A673 (cell line): ENCODE measurements at regions of chr4 and their contacts with region 1.

Region 1: DNA sequence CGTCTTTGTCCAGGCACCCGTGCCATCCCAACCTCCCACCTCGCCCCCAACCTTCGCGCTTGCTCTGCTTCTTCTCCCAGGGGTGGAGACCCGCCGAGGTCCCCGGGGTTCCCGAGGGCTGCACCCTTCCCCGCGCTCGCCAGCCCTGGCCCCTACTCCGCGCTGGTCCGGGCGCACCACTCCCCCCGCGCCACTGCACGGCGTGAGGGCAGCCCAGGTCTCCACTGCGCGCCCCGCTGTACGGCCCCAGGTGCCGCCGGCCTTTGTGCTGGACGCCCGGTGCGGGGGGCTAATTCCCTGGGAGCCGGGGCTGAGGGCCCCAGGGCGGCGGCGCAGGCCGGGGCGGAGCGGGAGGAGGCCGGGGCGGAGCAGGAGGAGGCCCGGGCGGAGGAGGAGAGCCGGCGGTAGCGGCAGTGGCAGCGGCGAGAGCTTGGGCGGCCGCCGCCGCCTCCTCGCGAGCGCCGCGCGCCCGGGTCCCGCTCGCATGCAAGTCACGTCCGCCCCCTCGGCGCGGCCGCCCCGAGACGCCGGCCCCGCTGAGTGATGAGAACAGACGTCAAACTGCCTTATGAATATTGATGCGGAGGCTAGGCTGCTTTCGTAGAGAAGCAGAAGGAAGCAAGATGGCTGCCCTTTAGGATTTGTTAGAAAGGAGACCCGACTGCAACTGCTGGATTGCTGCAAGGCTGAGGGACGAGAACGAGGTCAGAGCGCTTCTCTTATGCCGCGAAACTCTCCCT is at the start of gene TET2:
- DNase-seq: peak; percentile 97
- H3K4me3 ChIP-seq: peak within 1 kb of the TSS; percentile 88
- H3K27ac ChIP-seq: peak within 1 kb of the TSS; percentile 98
- H3K4me1 ChIP-seq: peaks cover 17% of the 10 kb centered on the region
- H3K27me3 ChIP-seq: no peaks in the 10 kb centered on the region
- CTCF ChIP-seq: no peak
- total RNA-seq, gene TET2: 22.8 and 25.7 TPM in 2 replicates

Region 2: DNA sequence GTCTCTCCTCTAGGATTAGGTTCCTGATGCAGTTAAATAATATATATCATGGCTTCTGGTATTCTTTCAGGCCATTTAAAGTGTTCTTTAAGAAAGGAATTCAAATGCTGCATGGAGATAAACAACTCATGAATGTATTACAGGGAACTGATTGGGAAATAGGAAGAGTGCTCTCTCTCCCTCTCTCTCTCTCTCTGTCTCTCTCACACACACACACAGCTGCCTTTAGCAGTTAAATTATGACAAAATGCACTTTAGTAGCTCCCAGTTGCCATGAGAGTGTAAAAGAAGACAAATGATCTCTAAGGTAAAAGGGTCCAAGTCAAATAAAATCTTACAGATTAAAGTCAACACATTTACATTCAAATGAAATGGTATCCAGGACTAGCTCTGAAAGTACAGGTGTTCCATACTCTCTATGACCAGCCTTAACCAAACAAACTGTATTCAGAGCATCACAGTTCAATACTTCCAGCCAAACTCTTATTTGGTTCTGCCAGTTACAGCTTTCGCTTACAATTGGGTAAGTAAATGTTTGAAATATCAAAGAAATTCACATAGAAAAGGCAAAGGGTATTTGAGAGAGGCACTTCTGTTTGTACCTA is 557.1 kb before region 1 on chr4:
- CTCF ChIA-PET with region 1: no interaction called
- POLR2A ChIA-PET with region 1: no interaction called
- intact Hi-C with region 1: no loop called
- DNase-seq: no peak
- H3K4me3 ChIP-seq: no peak overlapping the region
- H3K27ac ChIP-seq: no peak overlapping the region
- H3K4me1 ChIP-seq: peaks cover 22% of the 10 kb centered on the region
- H3K27me3 ChIP-seq: no peaks in the 10 kb centered on the region
- CTCF ChIP-seq: no peak

Region 3: DNA sequence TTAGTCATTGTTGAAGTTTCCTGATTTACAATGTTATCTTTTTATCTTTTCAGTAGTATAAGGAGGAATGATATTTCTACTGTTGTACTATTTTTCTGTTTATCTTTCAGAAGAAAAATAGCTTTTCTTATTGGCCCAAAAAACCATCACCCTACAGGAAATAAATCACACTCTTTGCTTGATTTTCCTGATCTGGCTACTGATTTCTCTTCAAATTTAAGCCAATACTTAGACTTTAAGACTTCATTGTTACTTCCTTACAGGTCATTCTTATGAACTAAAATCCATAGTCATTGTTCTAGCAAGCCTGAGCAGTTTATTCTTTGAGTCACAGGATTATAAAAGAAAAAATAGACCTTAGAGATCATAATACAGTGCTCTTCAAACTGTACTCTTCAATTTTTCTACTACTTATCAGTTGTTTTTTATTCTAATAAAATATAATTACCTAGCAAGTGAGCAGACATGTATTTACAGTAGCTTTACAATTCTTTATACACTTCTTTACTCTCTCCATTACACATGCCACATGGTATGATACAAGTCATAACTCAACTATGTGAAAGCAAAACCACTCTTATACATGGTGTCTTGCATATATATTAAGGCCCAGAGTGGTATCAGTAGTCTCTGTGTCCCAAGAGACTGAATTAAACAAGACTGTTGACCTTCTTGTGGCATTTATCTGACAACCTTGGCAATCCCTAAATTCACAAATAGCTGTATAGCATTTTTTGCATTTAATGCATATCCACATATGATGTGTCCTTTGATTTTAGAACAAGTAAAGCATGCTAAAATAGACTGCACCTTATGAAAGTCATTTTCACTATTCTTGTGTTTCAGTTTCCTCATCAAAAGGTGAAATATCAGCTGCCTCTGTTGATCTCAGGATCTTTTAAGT is 48.1 kb after region 1 on chr4:
- CTCF ChIA-PET with region 1: no interaction called
- POLR2A ChIA-PET with region 1: interaction called, 11 read pairs
- intact Hi-C with region 1: no loop called
- DNase-seq: no peak
- H3K4me3 ChIP-seq: no peak overlapping the region
- H3K27ac ChIP-seq: no peak overlapping the region
- H3K4me1 ChIP-seq: peaks cover 45% of the 10 kb centered on the region
- H3K27me3 ChIP-seq: no peaks in the 10 kb centered on the region
- CTCF ChIP-seq: no peak

Region 4: GRCh38 chr4:105352826-105353225 is 206.4 kb after region 1 on chr4:
- CTCF ChIA-PET with region 1: no interaction called
- POLR2A ChIA-PET with region 1: no interaction called
- intact Hi-C with region 1: loop called (anchors 10 kb)
- DNase-seq: no peak
- H3K4me3 ChIP-seq: no peak overlapping the region
- H3K27ac ChIP-seq: no peak overlapping the region
- H3K4me1 ChIP-seq: peaks cover 13% of the 10 kb centered on the region
- H3K27me3 ChIP-seq: no peaks in the 10 kb centered on the region
- CTCF ChIP-seq: no peak

Region 5: GRCh38 chr4:105483840-105484239 is 337.4 kb after region 1 on chr4:
- CTCF ChIA-PET with region 1: no interaction called
- POLR2A ChIA-PET with region 1: no interaction called
- intact Hi-C with region 1: no loop called
- DNase-seq: peak; percentile 81
- H3K4me3 ChIP-seq: no peak overlapping the region
- H3K27ac ChIP-seq: no peak overlapping the region
- H3K4me1 ChIP-seq: no peaks in the 10 kb centered on the region
- H3K27me3 ChIP-seq: no peaks in the 10 kb centered on the region
- CTCF ChIP-seq: no peak

Region 6: GRCh38 chr4:105715692-105716278 is 569.3 kb after region 1 on chr4:
- CTCF ChIA-PET with region 1: no interaction called
- POLR2A ChIA-PET with region 1: no interaction called
- intact Hi-C with region 1: loop called (anchors 2 kb)
- DNase-seq: peak; percentile 74
- H3K4me3 ChIP-seq: no peak overlapping the region
- H3K27ac ChIP-seq: no peak overlapping the region
- H3K4me1 ChIP-seq: peaks cover 31% of the 10 kb centered on the region
- H3K27me3 ChIP-seq: no peaks in the 10 kb centered on the region
- CTCF ChIP-seq: peak; percentile 64